ENCODE measurements at regions of chr1 and their contacts with region 1.

Region 1: GRCh38 chr1:39500862-39501389 is 9.5 kb downstream of the BMP8A start:
- DNase-seq: peak; percentile 64
- ATAC-seq: peak; percentile 61
- H3K4me3 ChIP-seq: no peak overlapping the region
- H3K27ac ChIP-seq: no peak overlapping the region
- H3K4me1 ChIP-seq: peaks cover 5% of the 10 kb centered on the region; the same call in 1 of the 2 replicates
- H3K27me3 ChIP-seq: no peaks in the 10 kb centered on the region
- CTCF ChIP-seq: no peak

Region 2: GRCh38 chr1:39462074-39462473 is 38.9 kb before region 1 on chr1:
- CTCF ChIA-PET with region 1: no interaction called
- POLR2A ChIA-PET with region 1: interaction called, 22 read pairs
- intact Hi-C with region 1: no loop called
- DNase-seq: peak; percentile 9
- ATAC-seq: peak; percentile 45; the same call in 1 of the 2 replicates
- H3K4me3 ChIP-seq: no peak overlapping the region
- H3K27ac ChIP-seq: no peak overlapping the region
- H3K4me1 ChIP-seq: no peaks in the 10 kb centered on the region
- H3K27me3 ChIP-seq: no peaks in the 10 kb centered on the region
- CTCF ChIP-seq: no peak

Region 3: DNA sequence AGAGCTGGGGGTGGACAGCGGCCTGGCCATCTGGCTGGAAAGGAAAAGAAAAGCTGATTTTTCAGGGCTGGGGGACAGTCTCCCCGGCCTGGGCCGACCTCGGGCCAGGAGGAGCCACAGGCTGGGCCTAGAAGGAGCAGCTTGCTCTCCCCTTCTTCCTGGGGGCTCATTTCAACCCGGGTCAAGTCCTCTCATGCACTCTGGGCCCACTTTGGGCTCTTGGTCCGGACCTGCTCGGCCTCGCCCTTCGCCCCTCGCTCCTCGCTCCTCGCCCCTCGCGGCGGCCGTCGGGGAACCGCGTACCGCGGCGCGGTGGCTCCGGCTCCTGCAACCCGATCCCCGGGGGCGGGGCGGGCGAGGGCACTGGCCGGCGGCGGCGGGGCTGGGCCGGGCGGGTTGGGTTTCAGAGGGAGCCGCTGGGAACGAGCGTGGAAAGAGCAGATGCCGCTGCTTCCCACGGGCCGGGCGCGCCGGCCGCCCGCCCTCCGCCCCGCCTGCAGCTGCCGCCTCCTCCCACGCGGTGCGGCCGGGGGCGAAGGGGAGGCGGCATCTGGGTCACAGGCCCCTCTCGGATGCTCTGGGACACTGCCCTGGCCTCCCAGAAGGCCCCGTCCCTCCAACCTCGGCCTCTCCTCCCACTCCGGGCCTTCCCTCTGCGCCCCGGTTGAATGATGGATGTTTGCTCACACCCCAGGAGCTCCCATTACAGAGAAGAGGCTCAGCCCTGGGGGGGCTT is 131.9 kb after region 1 on chr1:
- CTCF ChIA-PET with region 1: no interaction called
- POLR2A ChIA-PET with region 1: no interaction called
- intact Hi-C with region 1: no loop called
- DNase-seq: peak; percentile 39
- ATAC-seq: peak; percentile 89
- H3K4me3 ChIP-seq: no peak overlapping the region; the same call in 1 of the 2 replicates
- H3K27ac ChIP-seq: no peak overlapping the region
- H3K4me1 ChIP-seq: no peaks in the 10 kb centered on the region
- H3K27me3 ChIP-seq: peaks cover 13% of the 10 kb centered on the region
- CTCF ChIP-seq: no peak